PC-3 (cell line): ENCODE measurements at regions of chr11 and their contacts with region 1.

Region 1: DNA sequence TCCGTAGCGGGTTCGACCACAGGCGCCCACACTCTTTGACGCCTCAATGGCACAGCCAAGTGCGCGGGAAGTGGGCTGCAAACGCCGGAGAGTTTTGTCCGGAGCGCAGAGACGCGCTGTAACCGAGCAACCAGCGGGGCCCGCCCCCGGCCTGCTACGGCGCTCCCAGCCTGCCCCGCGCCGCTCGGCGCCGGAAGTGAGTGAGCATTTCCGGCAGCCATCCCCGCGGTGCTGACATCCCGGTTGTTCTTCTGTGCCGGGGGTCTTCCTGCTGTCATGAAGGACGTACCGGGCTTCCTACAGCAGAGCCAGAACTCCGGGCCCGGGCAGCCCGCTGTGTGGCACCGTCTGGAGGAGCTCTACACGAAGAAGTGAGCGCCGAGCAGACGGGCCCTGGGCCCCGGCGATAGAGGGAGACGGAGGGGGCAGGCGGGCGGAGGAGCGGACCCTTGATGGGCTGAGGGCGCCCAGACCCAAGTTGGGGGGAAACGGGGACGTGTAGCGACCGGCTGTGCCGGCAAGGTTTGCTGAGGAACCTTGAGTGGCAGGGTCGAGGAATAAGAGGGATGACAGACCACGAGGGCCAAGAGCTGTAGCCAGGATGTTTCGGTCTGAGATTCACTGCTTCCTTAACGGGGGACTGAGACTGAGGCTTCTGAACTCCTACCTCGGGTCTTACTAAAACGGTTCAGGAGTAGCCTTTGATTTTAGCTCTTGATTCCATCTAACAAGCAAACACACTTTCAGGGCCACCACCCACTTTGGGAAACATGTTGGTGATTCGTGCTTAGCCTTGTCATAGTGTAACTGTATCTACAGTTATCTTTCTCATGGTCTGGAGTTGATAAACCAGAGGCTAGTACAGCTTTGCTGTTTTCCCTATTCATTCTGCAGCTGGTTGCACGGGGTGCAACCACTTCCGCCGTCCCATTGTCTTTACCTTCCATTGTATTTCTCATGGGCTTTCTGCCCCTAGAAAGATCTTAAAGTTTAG is at the start of gene PSMD13:
- DNase-seq: peak; percentile 76
- ATAC-seq: peak; percentile 89
- H3K4me3 ChIP-seq: peak within 1 kb of the TSS; percentile 100
- H3K27ac ChIP-seq: peak within 1 kb of the TSS; percentile 93
- H3K4me1 ChIP-seq: peaks cover 17% of the 10 kb centered on the region
- H3K27me3 ChIP-seq: no peaks in the 10 kb centered on the region
- CTCF ChIP-seq: no peak
- total RNA-seq, gene PSMD13: 226 and 255 TPM in 2 replicates

Region 2: GRCh38 chr11:207208-207862 is 29.7 kb before region 1 on chr11 and contains the starts of genes BET1L and RIC8A:
- CTCF ChIA-PET with region 1: no interaction called
- POLR2A ChIA-PET with region 1: interaction called, 3 read pairs
- intact Hi-C with region 1: loop called (anchors 1 kb)
- DNase-seq: peak; percentile 94
- ATAC-seq: peak; percentile 65
- H3K4me3 ChIP-seq: peak within 1 kb of the TSS; percentile 91
- H3K27ac ChIP-seq: peak within 1 kb of the TSS; percentile 98
- H3K4me1 ChIP-seq: peaks cover 23% of the 10 kb centered on the region
- H3K27me3 ChIP-seq: no peaks in the 10 kb centered on the region
- CTCF ChIP-seq: no peak
- total RNA-seq, gene BET1L: 12.6 and 14.4 TPM in 2 replicates
- total RNA-seq, gene RIC8A: 155 and 180 TPM in 2 replicates